Activated CD8-positive, alpha-beta T cell treated with anti-CD3 and anti-CD28 coated beads for 36 hours (primary cell): ENCODE measurements at regions of chr14 and their contacts with region 1.

Region 1: DNA sequence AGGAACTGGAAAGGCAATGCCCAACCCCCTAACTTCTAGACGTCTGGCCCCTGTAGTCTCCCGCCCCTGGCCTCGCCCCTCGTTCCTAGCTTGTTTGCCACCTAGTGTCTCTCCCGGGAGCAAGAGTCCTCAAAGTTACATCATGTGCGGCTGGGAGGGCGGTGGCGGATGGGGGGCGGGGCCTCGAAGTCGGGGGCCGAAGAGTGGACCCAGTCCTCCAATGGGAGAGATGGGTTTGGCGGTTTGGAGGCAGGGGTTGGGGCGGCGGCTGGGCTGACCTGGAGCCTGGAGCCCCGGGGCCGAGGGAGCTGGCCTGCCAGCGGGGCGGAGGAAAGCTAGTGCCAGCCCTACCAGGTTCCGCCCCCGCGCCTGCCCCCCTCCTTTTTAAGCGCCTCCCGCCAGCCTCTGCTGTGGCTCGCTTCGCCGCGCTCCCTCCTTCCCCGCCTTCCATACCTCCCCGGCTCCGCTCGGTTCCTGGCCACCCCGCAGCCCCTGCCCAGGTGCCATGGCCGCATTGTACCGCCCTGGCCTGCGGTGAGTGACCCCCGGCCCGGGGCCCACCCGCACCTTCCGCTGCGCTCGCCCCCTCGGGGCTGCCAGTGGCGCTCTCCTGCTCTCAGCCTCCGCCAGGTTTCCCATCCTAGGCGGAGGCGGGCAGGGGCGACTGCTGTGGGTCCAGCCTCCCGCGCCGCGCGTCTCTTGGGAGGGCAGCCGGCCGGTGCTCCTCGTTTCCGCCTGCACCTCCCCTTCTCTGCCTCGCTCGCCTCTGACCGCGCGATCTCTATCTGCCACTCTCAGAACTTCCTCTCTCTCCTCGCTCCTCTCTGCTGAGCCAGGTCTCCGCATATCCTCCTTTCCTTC is at the start of gene PCK2:
- DNase-seq: peak; percentile 91
- ATAC-seq: peak; percentile 75
- H3K4me3 Mint-ChIP-seq: peak within 1 kb of the TSS; percentile 93
- H3K27ac Mint-ChIP-seq: peak within 1 kb of the TSS; percentile 95
- H3K4me1 Mint-ChIP-seq: peaks cover 24% of the 10 kb centered on the region
- H3K27me3 Mint-ChIP-seq: no peaks in the 10 kb centered on the region
- CTCF ChIP-seq: no peak
- total RNA-seq, gene PCK2: 90.3 to 93.1 TPM

Region 2: DNA sequence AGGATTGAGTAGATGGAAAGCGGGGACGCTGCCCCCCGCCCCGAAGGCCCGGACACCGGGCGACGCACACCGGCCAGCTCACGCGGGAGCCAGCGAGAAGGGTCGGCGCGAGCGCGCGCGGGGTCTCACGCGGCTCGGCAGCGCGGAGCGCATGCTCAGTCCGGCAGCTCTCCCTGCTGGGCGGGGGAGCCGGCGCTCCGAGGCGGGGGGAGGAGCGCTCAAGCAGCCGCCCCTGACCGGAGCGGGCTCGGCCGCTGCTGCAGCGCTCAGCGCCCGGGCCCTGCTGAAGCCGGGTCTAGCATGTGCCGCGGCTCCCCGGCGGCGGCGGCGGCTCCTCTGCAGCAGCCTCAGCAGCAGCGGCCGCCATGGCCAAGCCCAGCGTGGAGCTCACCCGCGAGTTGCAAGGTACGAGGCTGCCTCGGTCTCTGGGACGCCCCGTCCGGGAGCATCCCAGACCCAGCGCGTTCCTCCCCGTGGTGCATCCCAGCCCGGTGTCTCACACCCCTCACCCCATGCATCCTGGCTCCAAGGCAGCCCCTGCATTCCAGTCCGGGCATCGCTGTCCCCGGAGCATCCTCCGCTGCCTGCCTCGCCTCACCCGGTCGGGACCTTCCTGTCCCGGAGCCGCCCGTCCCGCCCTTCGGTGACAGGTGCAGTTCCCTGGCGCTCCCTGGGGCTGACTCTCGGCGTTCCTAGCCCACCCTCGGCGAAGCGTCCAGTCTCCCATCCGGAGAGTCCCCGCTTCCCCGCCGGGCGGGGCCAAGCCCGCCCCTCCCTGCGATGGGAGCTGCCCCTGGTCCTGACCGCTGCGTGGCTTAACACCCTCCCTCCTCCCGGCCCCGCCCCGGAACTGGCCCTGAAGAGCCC is 42.1 kb before region 1 on chr14 and contains the start of gene CARMIL3:
- CTCF ChIA-PET with region 1: interaction called, 345 read pairs
- POLR2A ChIA-PET with region 1: interaction called, 25 read pairs
- intact Hi-C with region 1: no loop called
- DNase-seq: peak; percentile 65
- ATAC-seq: peak; percentile 60
- H3K4me3 Mint-ChIP-seq: peak within 1 kb of the TSS; percentile 67
- H3K27ac Mint-ChIP-seq: peak within 1 kb of the TSS; percentile 10
- H3K4me1 Mint-ChIP-seq: peaks cover 19% of the 10 kb centered on the region
- H3K27me3 Mint-ChIP-seq: peaks cover 5% of the 10 kb centered on the region
- CTCF ChIP-seq: no peak
- total RNA-seq, gene CARMIL3: 0.63 to 0.83 TPM

Region 3: DNA sequence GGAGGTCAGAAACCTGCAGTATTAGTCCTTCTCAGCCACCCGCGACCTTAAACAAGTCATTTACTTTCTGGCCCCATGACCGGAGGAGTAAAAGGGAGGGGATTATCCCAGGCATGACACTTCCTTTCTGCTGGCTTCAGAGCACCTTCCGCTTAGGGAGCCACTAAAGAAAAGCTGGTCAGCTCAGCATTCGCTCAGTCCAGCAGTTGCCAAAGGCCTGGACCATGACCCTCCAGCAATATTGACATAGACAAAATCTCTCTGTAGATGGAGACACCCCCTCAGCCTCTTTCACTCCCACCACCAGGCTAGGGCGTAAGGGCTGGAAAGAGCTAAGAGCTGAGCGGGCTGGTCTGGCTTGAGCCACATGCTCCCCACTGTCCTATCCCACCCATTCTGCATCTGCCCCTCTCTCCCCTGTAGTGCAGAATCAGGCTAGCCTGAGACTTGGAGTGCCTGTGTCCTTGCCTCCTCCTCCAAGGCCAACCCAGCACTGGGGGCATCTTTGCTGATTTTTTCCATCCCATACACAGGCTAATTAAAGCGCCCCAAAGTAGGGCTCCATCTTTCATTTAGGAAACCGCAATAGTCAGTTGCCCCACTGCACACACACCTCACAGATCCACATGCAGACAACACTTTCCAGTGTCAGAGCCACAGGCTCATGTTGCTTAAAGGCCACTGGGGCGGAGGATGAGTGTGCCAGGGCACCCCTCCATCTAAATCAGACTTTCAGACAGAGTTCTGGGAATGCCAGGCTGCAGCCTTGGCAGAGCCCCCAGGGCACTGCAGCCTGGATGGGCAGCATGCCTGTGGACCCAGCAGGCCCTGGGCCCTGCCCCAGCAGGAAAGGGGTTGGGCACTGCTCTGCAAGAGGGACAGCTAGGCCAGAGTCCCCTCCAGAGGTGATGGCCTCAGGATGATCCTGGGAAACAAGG is 26.7 kb before region 1 on chr14:
- CTCF ChIA-PET with region 1: interaction called, 345 read pairs
- POLR2A ChIA-PET with region 1: interaction called, 3 read pairs
- intact Hi-C with region 1: no loop called
- DNase-seq: no peak
- ATAC-seq: no peak
- H3K4me3 Mint-ChIP-seq: no peak overlapping the region
- H3K27ac Mint-ChIP-seq: no peak overlapping the region
- H3K4me1 Mint-ChIP-seq: peaks cover 7% of the 10 kb centered on the region
- H3K27me3 Mint-ChIP-seq: no peaks in the 10 kb centered on the region
- CTCF ChIP-seq: no peak

Region 4: GRCh38 chr14:24080888-24081738 is 13.0 kb before region 1 on chr14:
- CTCF ChIA-PET with region 1: interaction called, 99 read pairs
- POLR2A ChIA-PET with region 1: interaction called, 57 read pairs
- intact Hi-C with region 1: no loop called
- DNase-seq: peak; percentile 89
- ATAC-seq: peak; percentile 93
- H3K4me3 Mint-ChIP-seq: peak overlapping the region; percentile 75
- H3K27ac Mint-ChIP-seq: peak overlapping the region; percentile 75
- H3K4me1 Mint-ChIP-seq: peaks cover 19% of the 10 kb centered on the region
- H3K27me3 Mint-ChIP-seq: no peaks in the 10 kb centered on the region
- CTCF ChIP-seq: no peak

Region 5: DNA sequence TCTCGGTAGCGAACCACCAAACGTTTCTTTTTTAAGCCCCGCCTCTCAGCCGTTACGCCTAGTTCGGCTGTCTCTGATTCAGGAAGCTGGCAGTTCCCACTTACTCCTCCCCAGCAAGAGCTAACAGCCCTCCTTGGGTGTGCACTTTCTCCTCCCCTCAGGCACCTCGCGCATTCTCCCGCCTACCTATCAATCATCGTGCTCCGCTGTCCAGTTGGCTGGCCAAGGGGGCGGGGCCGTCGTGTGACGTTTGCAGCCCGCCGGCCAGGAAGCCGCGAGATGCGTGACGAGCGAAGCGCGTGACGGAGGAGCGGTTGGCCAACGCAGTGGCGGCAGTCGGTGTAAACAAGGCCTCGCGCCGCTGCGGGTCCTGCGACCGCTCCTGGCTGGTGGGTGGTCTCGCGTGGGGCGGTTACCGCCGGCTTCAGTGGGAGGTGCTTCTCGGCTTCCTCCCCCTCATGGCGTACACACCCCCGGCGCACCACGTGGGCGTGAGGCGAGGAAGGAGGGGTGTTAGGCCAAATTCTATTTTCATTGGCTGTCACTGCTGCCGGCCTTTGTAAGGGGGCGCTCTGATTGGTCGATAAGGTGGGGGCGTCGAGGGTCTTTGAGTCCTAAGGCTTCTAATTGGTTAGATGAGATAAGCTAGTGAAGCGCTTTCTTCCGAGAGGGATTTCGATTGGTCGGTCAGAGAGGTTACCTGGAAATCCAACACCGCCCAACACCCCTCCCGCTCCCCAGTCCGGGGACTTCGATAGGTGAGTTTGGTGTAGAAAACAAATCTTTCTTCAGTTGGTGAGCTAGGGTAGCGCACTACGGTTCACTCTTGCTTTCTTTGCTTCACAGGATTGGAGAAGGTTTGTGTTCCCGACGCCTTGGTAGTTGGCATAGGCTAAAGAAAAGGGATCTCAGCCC is 20.7 kb after region 1 on chr14 and contains the starts of genes DCAF11 and NRL:
- CTCF ChIA-PET with region 1: interaction called, 218 read pairs
- POLR2A ChIA-PET with region 1: interaction called, 80 read pairs
- intact Hi-C with region 1: no loop called
- DNase-seq: peak; percentile 99
- ATAC-seq: peak; percentile 88
- H3K4me3 Mint-ChIP-seq: peak within 1 kb of the TSS; percentile 98
- H3K27ac Mint-ChIP-seq: peak within 1 kb of the TSS; percentile 99
- H3K4me1 Mint-ChIP-seq: peaks cover 20% of the 10 kb centered on the region
- H3K27me3 Mint-ChIP-seq: no peaks in the 10 kb centered on the region
- CTCF ChIP-seq: no peak
- total RNA-seq, gene DCAF11: 59.9 to 63.9 TPM
- total RNA-seq, gene NRL: 1.8 to 2.5 TPM

Region 6: DNA sequence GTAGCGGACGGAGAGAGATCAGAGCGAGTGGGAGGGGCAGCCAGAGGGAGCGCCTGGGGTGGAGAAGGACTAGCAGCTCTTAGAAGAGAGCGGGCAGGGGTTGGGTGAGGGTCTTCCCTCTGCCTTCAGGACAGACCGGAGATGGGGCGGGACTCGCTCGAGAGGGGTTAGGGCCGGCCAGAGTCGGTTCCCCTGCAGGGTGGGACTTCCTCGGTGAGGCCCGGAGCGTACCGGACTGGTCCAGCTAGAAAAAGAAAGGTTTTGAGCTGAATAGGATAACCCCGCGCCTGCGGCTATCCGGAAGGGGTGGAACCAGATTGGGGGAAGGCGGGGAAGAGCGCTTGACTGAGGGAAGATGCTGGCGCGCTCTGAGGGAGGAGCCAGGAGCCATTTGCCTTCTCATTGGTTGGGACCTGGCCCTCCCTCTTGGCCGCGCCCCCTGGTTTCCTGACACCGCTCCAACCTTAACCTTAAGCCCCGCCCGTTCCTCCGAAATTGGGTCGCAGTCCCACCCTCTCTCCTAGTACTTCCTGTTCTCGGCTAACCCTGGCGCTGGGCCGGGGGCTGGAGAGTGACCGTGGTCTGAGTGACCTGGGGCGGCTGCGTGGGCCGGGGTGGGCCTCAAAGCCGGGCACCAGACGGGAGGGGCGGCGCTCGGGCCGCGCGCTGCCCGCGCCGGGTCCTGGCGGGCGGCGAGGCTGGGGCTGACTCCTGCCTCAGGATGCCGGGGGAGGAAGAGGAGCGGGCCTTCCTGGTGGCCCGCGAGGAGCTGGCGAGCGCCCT is 53.0 kb after region 1 on chr14 and contains the start of gene RNF31:
- CTCF ChIA-PET with region 1: interaction called, 12 read pairs
- POLR2A ChIA-PET with region 1: interaction called, 3 read pairs
- intact Hi-C with region 1: no loop called
- DNase-seq: peak; percentile 100
- ATAC-seq: peak; percentile 87
- H3K4me3 Mint-ChIP-seq: peak within 1 kb of the TSS; percentile 89
- H3K27ac Mint-ChIP-seq: peak within 1 kb of the TSS; percentile 98
- H3K4me1 Mint-ChIP-seq: peaks cover 58% of the 10 kb centered on the region
- H3K27me3 Mint-ChIP-seq: no peaks in the 10 kb centered on the region
- CTCF ChIP-seq: no peak
- total RNA-seq, gene RNF31: 71.6 to 75.0 TPM

Region 7: DNA sequence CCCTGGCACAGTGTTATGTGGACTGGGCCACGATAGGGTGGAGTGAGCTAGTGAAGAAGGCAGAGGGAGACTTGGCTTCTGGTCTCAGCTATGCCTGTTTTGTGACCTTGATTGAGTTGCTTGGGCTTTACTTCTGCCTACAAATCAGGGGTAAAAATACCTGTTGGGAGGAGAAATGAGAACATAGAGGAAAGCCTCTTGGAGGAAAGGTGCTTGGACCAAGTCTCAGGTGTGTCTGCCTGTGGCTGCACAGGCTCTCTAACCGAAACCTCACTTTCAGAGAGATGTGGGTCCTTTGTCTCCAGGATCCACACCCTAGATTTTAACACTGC is 343.6 kb after region 1 on chr14:
- CTCF ChIA-PET with region 1: no interaction called
- POLR2A ChIA-PET with region 1: no interaction called
- intact Hi-C with region 1: no loop called
- DNase-seq: no peak
- ATAC-seq: no peak
- H3K4me3 Mint-ChIP-seq: no peak overlapping the region
- H3K27ac Mint-ChIP-seq: peak overlapping the region; percentile 81
- H3K4me1 Mint-ChIP-seq: peaks cover 55% of the 10 kb centered on the region
- H3K27me3 Mint-ChIP-seq: no peaks in the 10 kb centered on the region
- CTCF ChIP-seq: no peak